ENCODE measurements at regions of chrX and their contacts with region 1.

Region 1: DNA sequence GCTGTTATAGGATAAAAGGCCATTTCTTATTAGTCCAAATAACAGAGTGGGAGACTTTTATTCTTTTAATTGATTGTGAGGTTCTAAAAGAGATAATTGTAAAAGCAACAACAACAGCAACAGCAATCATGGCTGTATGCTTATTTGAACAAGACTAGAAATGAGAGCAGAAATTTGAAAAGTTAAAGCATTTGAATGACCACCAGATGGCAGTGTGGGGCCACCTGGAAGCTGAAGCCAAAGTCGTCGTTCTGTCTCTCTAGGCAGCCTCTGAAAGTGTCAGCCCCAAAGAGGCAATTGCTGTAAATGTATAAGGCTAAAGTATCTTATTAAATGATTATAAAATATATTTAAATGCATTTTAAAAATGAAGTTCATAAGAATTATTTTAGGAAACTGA is 42.2 kb downstream of the SH2D1A start:
- DNase-seq: peak in 8 of 10 donors; percentile 30 to 69 (median 55)
- H3K4me3 ChIP-seq: no peak overlapping the region
- H3K27ac ChIP-seq: no peak overlapping the region
- H3K27me3 ChIP-seq: peaks cover 0 to 79% (median 14%) of the 10 kb centered on the region in 45 donors
- CTCF ChIP-seq: peak; percentile 49 to 95 (median 82)

Region 2: DNA sequence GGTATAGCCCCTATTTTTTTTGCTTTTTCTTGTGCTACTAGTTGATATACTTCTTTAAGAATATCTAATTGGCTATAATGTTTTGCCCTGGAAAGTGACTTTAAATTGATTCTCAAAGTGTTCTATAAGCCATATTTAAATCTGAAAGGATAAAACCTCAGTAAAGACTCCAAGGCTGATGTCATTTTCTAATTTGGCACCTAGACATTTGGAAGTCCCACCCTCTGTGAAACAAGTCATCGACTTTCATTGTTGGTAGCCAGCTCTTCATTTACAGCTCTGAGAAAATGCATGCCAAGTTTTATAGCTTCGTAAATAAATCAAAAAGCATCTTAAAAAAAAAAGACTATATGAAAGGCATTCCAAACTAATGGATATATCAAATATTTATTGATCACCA is 445.1 kb before region 1 on chrX:
- intact Hi-C with region 1: no loop called
- DNase-seq: no peak
- H3K4me3 ChIP-seq: no peak overlapping the region
- H3K27ac ChIP-seq: no peak overlapping the region
- H3K27me3 ChIP-seq: peaks cover 0 to 12% (median 0%) of the 10 kb centered on the region in 45 donors
- CTCF ChIP-seq: no peak

Region 3: DNA sequence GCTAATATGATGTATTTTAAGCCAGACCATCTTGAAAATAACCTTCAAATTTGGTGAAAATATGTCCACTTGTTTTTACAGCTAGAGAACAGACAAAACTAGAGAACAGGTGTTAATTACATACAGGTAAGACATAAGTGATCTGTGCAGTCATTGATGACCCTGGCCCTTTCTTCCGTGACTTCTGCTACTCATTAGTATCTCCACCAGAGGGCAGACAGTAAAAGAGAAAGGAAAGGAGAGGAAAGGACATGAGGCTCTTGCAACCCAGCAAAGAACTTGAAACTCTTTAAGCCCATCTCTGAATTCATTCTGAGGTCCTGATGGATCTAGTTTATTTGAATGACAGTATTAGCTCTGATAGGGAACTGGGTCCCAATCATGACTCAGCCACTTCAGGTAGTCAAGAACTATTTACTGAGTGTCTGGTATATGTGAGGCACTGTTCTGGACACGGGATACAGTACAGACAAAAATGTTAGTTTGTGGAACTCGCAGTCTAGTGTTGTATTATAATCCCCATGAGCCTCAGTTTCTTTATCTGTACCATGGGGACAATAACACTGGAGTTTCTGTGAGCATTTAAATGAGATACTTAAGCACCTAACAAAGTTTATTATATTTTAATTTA is 177.1 kb before region 1 on chrX:
- intact Hi-C with region 1: loop called in 1 of 2 experiments (anchors 10 kb)
- DNase-seq: no peak
- H3K4me3 ChIP-seq: no peak overlapping the region
- H3K27ac ChIP-seq: no peak overlapping the region
- H3K27me3 ChIP-seq: peaks cover 0 to 15% (median 0%) of the 10 kb centered on the region in 45 donors
- CTCF ChIP-seq: peak in 52 of 56 donors; percentile 15 to 70 (median 54)

Measured in dorsolateral prefrontal cortex (tissue), 120 donors.